Adrenal gland (tissue), 19 donors: ENCODE measurements at regions of chr11 and their contacts with region 1.

Region 1: DNA sequence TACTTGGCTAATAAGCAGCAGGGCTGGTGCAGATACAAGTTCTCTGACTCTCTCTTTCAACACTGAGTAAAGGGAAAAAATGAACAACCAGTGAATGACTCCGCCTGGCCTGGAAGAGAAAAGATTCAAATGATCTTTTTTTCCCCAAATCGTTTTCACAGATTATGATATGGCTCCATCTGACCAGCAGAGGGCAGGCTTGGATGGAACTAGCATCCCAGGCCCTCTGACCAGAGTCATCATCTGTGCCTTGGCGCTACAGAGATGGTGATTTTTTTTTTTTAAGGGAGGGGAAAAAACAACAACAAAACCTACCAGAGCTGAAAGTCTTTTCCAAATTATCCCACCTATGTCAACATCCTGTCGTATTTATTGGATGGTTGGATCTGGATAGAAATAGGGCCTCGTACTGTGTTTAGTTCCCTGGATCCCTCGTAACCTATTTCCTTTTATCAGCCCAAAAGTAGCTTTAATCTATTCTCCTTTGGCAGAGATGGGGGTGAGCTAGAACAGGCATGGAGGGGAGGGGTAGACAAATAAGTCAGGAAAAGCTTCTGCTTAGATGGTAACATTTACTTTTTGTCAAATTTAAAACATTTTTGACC is 69.7 kb downstream of the PRSS23 start:
- DNase-seq: peak; percentile 45 to 85 (median 69)
- H3K4me3 ChIP-seq: no peak overlapping the region
- H3K27ac ChIP-seq: no peak overlapping the region
- H3K4me1 ChIP-seq: no peaks in the 10 kb centered on the region
- H3K27me3 ChIP-seq: no peaks in the 10 kb centered on the region
- CTCF ChIP-seq: peak; percentile 58 to 81 (median 78)
- POLR2A ChIP-seq: no peak

Region 2: GRCh38 chr11:86524620-86525352 is 345.3 kb before region 1 on chr11:
- intact Hi-C with region 1: no loop called
- DNase-seq: no peak
- H3K4me3 ChIP-seq: no peak overlapping the region
- H3K27ac ChIP-seq: peak overlapping the region in 3 of 5 donors; percentile 56 to 76 (median 73)
- H3K4me1 ChIP-seq: peaks cover 16 to 21% of the 10 kb centered on the region in 2 donors
- H3K27me3 ChIP-seq: no peaks in the 10 kb centered on the region
- CTCF ChIP-seq: no peak
- POLR2A ChIP-seq: no peak

Region 3: GRCh38 chr11:86919557-86920210 is 49.6 kb after region 1 on chr11:
- intact Hi-C with region 1: loop called (anchors 2 to 5 kb)
- DNase-seq: peak in 1 of 7 donors; percentile 23
- H3K4me3 ChIP-seq: no peak overlapping the region
- H3K27ac ChIP-seq: no peak overlapping the region
- H3K4me1 ChIP-seq: peaks cover 0 to 7% of the 10 kb centered on the region in 2 donors
- H3K27me3 ChIP-seq: no peaks in the 10 kb centered on the region
- CTCF ChIP-seq: peak; percentile 52 to 73 (median 64)
- POLR2A ChIP-seq: no peak

Region 4: DNA sequence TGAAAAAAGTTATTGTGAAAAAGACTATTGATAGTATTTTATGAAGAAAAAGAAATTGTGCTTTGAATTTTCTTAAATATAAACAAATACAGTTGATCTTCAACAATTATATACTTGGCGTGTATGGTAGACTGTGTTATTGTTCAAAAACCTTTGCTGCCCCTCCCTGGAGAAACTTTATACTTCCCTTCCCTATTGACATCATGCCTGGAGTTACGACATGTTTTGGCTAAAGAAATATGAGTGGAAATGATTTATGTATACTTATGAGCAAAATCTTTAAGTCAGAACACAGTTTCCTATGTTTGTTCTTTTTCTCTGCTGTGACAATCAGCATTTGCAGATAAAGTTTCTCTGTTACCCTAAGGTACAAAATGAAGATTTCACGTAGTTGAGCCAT is 411.4 kb after region 1 on chr11:
- intact Hi-C with region 1: loop called in 1 of 2 experiments (anchors 10 kb)
- DNase-seq: peak in 1 of 7 donors; percentile 13
- H3K4me3 ChIP-seq: no peak overlapping the region
- H3K27ac ChIP-seq: no peak overlapping the region
- H3K4me1 ChIP-seq: no peaks in the 10 kb centered on the region
- H3K27me3 ChIP-seq: no peaks in the 10 kb centered on the region
- CTCF ChIP-seq: peak in 2 of 6 experiments; percentile 32 to 47
- POLR2A ChIP-seq: no peak